CD14-positive monocyte (primary cell): ENCODE measurements at regions of chr10 and their contacts with region 1.

Region 1: DNA sequence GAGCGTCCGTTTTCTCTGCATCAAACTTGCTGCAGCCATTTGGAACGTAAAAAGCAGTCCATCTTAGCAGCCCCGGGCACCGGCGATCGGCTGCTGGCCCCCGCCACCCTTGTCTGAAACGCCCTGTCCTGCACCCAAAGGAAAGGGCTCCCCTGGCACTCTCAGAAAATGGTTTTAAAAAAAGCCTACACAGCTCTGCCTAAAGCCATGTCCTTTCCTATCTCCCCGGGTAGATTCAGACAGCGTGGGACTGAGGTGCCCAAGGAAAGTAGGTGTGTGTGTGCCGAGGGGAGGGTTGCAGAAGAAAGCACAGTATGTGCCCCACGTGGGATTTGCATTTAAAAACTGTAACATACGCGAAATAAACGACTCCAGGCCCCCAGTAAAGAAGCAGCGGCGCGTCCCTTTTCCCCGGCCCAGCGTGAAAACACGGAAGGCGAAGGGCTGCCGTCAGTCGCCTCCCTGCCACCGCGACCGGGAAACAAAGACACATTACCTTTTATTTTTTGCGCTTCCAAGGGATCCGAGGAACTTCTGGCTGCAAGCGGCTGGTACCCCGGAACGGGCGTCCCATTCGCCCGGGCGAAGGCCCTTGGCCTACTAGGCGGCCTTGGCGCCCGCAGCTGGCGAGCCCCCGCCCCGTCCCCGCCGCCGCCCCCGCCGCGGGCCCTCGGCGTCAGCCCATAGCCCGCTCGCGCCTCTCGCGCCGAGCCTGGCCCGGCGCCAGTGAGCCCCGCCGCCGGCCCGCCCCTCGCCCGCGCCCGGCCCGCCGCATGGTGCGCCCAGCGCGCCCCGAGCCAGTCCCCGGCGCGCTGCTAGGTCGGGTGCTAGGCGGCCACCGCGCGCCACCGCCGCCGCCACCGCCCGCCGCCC is 304.6 kb downstream of the PRPF18 start:
- DNase-seq: no peak
- H3K4me3 ChIP-seq: peak overlapping the region in 1 of 3 experiments; percentile 49
- H3K4me3 Mint-ChIP-seq: peak overlapping the region; percentile 67 to 86
- H3K27ac ChIP-seq: no peak overlapping the region
- H3K27ac Mint-ChIP-seq: no peak overlapping the region
- H3K4me1 ChIP-seq: peaks cover 12 to 14% of the 10 kb centered on the region in 2 donors
- H3K4me1 Mint-ChIP-seq: peaks cover 33% of the 10 kb centered on the region
- H3K27me3 ChIP-seq: peaks cover 71 to 82% of the 10 kb centered on the region in 2 donors
- H3K27me3 Mint-ChIP-seq: peaks cover 86 to 87% (median 86%) of the 10 kb centered on the region in 3 donors
- CTCF ChIP-seq: no peak

Region 2: DNA sequence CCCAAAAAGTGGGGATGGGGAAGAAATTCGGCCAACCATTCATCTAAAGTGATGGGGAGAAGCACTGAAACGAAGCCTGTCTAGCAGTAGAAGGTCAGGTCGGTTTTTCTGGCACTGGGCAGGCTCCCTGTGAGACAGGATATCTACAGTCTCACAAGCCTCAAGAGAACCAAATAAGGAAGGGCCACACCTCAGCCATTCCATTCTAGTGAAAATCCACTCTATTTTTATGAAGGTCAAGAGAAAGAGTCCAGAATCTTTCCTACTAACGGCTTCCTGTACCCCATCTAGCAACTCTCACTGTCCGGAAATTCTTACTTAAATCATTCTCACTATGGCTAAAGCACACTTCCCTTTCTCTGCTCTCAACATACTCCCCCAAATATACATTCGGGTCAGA is 37.5 kb before region 1 on chr10:
- intact Hi-C with region 1: loop called in 1 of 2 experiments (anchors 5 kb)
- DNase-seq: peak in 1 of 3 donors; percentile 22
- H3K4me3 ChIP-seq: no peak overlapping the region
- H3K4me3 Mint-ChIP-seq: peak overlapping the region; percentile 37 to 81
- H3K27ac ChIP-seq: no peak overlapping the region
- H3K27ac Mint-ChIP-seq: peak overlapping the region in 3 of 7 donors; percentile 25 to 82 (median 63)
- H3K4me1 ChIP-seq: peaks cover 18 to 23% of the 10 kb centered on the region in 2 donors
- H3K4me1 Mint-ChIP-seq: peaks cover 28% of the 10 kb centered on the region
- H3K27me3 ChIP-seq: peaks cover 0 to 2% of the 10 kb centered on the region in 2 donors
- H3K27me3 Mint-ChIP-seq: peaks cover 6% of the 10 kb centered on the region in 3 donors
- CTCF ChIP-seq: no peak